ENCODE measurements at regions of chr17 and their contacts with region 1.

Region 1: GRCh38 chr17:78970834-78971773 is 8.6 kb downstream of the LGALS3BP start:
- DNase-seq: peak; percentile 81
- ATAC-seq: peak; percentile 51
- H3K4me3 ChIP-seq: no peak overlapping the region
- H3K27ac ChIP-seq: peak overlapping the region; percentile 0
- H3K4me1 ChIP-seq: peaks cover 27% of the 10 kb centered on the region
- H3K27me3 ChIP-seq: no peaks in the 10 kb centered on the region
- CTCF ChIP-seq: peak; percentile 96
- EP300 ChIP-seq: no peak; a peak in 1 of 4 replicates
- POLR2A ChIP-seq: no peak; a peak in 1 of 4 replicates
- RAD21 ChIP-seq: peak; percentile 93

Region 2: GRCh38 chr17:78598013-78598471 is 373.1 kb before region 1 on chr17:
- CTCF ChIA-PET with region 1: no interaction called
- POLR2A ChIA-PET with region 1: no interaction called
- in situ Hi-C with region 1: no loop called
- intact Hi-C with region 1: no loop called
- DNase-seq: no peak
- ATAC-seq: no peak
- H3K4me3 ChIP-seq: no peak overlapping the region
- H3K27ac ChIP-seq: no peak overlapping the region
- H3K4me1 ChIP-seq: peaks cover 90% of the 10 kb centered on the region
- H3K27me3 ChIP-seq: no peaks in the 10 kb centered on the region
- CTCF ChIP-seq: no peak
- EP300 ChIP-seq: no peak
- POLR2A ChIP-seq: no peak
- RAD21 ChIP-seq: no peak

Region 3: GRCh38 chr17:78883164-78884122 is 87.7 kb before region 1 on chr17:
- CTCF ChIA-PET with region 1: interaction called, 7 read pairs
- POLR2A ChIA-PET with region 1: no interaction called
- in situ Hi-C with region 1: loop called (anchors 5 kb)
- intact Hi-C with region 1: no loop called
- DNase-seq: peak; percentile 92
- ATAC-seq: peak; percentile 83
- H3K4me3 ChIP-seq: peak overlapping the region; percentile 17 to 60 (median 38); a peak in 5 of 6 replicates
- H3K27ac ChIP-seq: peak overlapping the region; percentile 66
- H3K4me1 ChIP-seq: peaks cover 29% of the 10 kb centered on the region
- H3K27me3 ChIP-seq: no peaks in the 10 kb centered on the region
- CTCF ChIP-seq: peak; percentile 12; the same call in 1 of the 2 replicates
- EP300 ChIP-seq: peak; percentile 15 to 44; a peak in 2 of 4 replicates
- POLR2A ChIP-seq: peak; percentile 44 to 47; a peak in 2 of 4 replicates
- RAD21 ChIP-seq: peak; percentile 12; the same call in 1 of the 2 replicates

Measured in HepG2 (cell line).